Transverse colon (tissue), 4 donors: ENCODE measurements at regions of chr18 and their contacts with region 1.

Region 1: GRCh38 chr18:32470713-32471633 is at the start of gene GAREM1:
- DNase-seq: peak; percentile 96
- H3K4me3 ChIP-seq: peak within 1 kb of the TSS; percentile 52 to 91 (median 77)
- H3K27ac ChIP-seq: peak within 1 kb of the TSS; percentile 88 to 94 (median 92)
- H3K4me1 ChIP-seq: peaks cover 0 to 34% (median 13%) of the 10 kb centered on the region in 4 donors
- H3K27me3 ChIP-seq: no peaks in the 10 kb centered on the region
- CTCF ChIP-seq: peak; percentile 47 to 77 (median 65)
- EP300 ChIP-seq: no peak
- POLR2A ChIP-seq: peak; percentile 80
- total RNA-seq, gene GAREM1: 7.9 to 47.6 (median 25.9) TPM

Region 2: DNA sequence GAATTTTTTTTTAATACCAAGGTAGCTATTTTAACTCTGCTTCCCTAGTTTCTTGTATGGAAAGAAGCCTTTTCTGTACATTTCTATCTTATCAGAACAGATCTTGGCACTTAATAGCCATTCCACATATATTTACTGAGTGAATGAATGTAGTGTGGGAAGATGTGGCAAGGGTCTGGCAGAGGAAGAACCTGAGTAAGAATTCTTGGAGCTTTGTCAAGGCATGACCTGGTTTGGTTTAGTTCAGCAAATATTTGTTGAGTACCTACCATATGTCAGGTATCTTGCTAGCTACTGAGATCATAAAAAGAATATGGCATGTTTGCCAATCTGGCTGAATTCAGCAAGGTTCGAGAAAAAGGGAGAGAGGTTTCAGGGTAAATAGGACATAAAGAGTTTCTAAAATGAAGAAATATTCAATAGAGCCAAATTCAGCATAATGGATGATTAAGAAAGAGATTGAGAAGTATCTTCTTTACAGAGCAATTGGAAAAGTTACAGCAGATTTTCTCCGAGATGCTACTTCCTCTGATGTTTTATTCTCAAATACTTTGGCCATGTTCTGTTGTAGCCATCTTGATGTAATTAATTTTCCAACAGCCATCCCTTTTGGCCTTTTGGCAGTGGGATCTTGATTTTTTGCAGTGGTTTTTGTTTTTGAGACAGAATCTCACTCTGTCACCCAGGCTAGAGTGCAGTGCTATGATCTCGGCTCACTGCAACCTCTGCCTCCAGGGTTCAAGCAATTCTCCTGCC is 302.8 kb before region 1 on chr18:
- in situ Hi-C with region 1: loop called in 1 of 4 experiments (anchors 25 kb)
- intact Hi-C with region 1: loop called (anchors 10 kb)
- DNase-seq: no peak
- H3K4me3 ChIP-seq: no peak overlapping the region
- H3K27ac ChIP-seq: no peak overlapping the region
- H3K4me1 ChIP-seq: no peaks in the 10 kb centered on the region
- H3K27me3 ChIP-seq: no peaks in the 10 kb centered on the region
- CTCF ChIP-seq: no peak
- EP300 ChIP-seq: no peak
- POLR2A ChIP-seq: no peak

Region 3: DNA sequence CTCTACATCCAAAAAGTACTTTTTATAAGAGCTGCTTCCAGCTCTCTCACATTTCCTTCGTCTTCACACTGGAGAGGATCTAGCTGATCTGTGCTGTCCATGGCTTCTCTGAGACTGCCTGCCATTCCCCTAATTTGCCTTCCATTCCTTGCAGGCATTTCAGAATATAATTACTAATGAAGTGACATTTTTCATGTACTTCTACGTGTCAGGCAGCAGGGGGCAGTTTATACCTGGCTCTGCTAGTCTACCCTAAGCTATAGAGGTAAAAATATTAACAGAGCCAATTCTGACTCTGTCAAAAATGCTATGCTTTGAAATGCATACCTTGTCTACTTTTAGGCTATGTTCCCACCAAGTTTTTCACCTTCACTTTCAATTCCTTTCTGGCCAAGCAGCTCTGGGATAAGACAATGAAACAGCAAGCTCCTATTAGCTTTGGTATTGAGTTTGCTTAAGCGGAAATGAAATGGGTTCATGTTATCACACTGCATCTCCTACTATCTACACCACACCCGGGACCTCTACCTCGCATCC is 199.2 kb before region 1 on chr18:
- in situ Hi-C with region 1: loop called in 3 of 4 experiments (anchors 10 to 25 kb)
- intact Hi-C with region 1: no loop called
- DNase-seq: peak; percentile 21
- H3K4me3 ChIP-seq: no peak overlapping the region
- H3K27ac ChIP-seq: no peak overlapping the region
- H3K4me1 ChIP-seq: peaks cover 0 to 22% (median 5%) of the 10 kb centered on the region in 4 donors
- H3K27me3 ChIP-seq: no peaks in the 10 kb centered on the region
- CTCF ChIP-seq: peak; percentile 65 to 71 (median 67)
- EP300 ChIP-seq: no peak
- POLR2A ChIP-seq: no peak

Region 4: GRCh38 chr18:32349728-32350395 is 121.1 kb before region 1 on chr18:
- in situ Hi-C with region 1: loop called in 1 of 4 experiments (anchors 25 kb)
- intact Hi-C with region 1: no loop called
- DNase-seq: peak; percentile 62
- H3K4me3 ChIP-seq: no peak overlapping the region
- H3K27ac ChIP-seq: peak overlapping the region; percentile 47 to 76 (median 48)
- H3K4me1 ChIP-seq: peaks cover 0 to 41% (median 12%) of the 10 kb centered on the region in 4 donors
- H3K27me3 ChIP-seq: no peaks in the 10 kb centered on the region
- CTCF ChIP-seq: no peak
- EP300 ChIP-seq: no peak
- POLR2A ChIP-seq: no peak

Region 5: GRCh38 chr18:32383050-32383819 is 87.7 kb before region 1 on chr18:
- in situ Hi-C with region 1: no loop called
- intact Hi-C with region 1: no loop called
- DNase-seq: no peak
- H3K4me3 ChIP-seq: no peak overlapping the region
- H3K27ac ChIP-seq: peak overlapping the region; percentile 53 to 62 (median 56)
- H3K4me1 ChIP-seq: peaks cover 4 to 38% (median 17%) of the 10 kb centered on the region in 4 donors
- H3K27me3 ChIP-seq: no peaks in the 10 kb centered on the region
- CTCF ChIP-seq: no peak
- EP300 ChIP-seq: no peak
- POLR2A ChIP-seq: no peak

Region 6: GRCh38 chr18:32509111-32509510 is 38.1 kb after region 1 on chr18:
- in situ Hi-C with region 1: no loop called
- intact Hi-C with region 1: no loop called
- DNase-seq: no peak
- H3K4me3 ChIP-seq: no peak overlapping the region
- H3K27ac ChIP-seq: no peak overlapping the region
- H3K4me1 ChIP-seq: no peaks in the 10 kb centered on the region
- H3K27me3 ChIP-seq: no peaks in the 10 kb centered on the region
- CTCF ChIP-seq: no peak
- EP300 ChIP-seq: no peak
- POLR2A ChIP-seq: no peak